T-cell (primary cell): ENCODE measurements at regions of chr20 and their contacts with region 1.

Region 1: GRCh38 chr20:57426831-57427230 is 35.6 kb downstream of the RBM38 start:
- DNase-seq: no peak
- ATAC-seq: no peak
- H3K4me3 ChIP-seq: no peak overlapping the region
- H3K4me3 Mint-ChIP-seq: peak overlapping the region in 1 of 3 donors; percentile 48
- H3K27ac ChIP-seq: no peak overlapping the region
- H3K27ac Mint-ChIP-seq: no peak overlapping the region
- H3K4me1 ChIP-seq: peaks cover 24 to 58% of the 10 kb centered on the region in 2 experiments
- H3K4me1 Mint-ChIP-seq: peaks cover 42 to 55% (median 53%) of the 10 kb centered on the region in 3 donors
- H3K27me3 ChIP-seq: peaks cover 0 to 11% of the 10 kb centered on the region in 2 experiments
- H3K27me3 Mint-ChIP-seq: no peaks in the 10 kb centered on the region

Region 2: DNA sequence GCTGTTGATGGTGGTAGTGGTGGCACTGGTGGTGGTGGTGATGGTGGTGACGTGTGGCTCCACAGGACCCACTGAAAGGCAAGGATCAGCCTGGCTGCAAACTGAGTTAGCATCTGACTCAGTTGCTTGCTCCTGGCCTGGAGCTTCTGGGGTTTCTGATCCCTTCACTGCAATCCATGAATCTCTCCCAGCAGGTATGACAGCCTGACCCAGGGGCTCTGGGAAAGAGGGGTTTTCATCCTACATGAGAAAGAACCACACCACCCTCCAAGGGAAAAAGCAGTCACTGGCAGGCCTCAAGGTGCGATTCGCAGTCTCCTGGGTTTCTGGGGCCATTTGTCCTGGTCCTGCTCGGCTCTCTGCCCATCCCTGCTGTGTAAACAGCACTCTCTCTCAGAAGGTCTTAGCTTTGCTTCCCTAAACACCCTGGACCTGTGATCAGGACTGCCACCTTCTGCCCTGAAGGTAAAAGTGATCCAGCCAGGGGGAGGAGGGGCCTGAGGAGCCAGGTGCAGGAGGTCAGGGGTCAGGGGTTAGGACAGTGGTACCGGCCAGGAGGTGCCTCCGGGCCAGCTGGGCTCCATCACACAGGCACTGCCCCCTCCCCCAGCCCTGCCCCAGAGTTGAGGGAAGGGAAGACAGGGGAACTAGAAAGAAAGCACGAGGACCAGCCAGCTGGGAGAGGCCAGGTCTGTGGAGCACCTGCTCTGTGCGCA is 312.4 kb before region 1 on chr20:
- CTCF ChIA-PET with region 1: no interaction called
- POLR2A ChIA-PET with region 1: interaction called in 1 of 2 experiments, 18 read pairs
- DNase-seq: no peak
- ATAC-seq: no peak
- H3K4me3 ChIP-seq: no peak overlapping the region
- H3K4me3 Mint-ChIP-seq: no peak overlapping the region
- H3K27ac ChIP-seq: no peak overlapping the region
- H3K27ac Mint-ChIP-seq: no peak overlapping the region
- H3K4me1 ChIP-seq: no peaks in the 10 kb centered on the region
- H3K4me1 Mint-ChIP-seq: no peaks in the 10 kb centered on the region
- H3K27me3 ChIP-seq: peaks cover 0 to 21% of the 10 kb centered on the region in 2 experiments
- H3K27me3 Mint-ChIP-seq: peaks cover 3 to 13% of the 10 kb centered on the region in 2 donors

Region 3: DNA sequence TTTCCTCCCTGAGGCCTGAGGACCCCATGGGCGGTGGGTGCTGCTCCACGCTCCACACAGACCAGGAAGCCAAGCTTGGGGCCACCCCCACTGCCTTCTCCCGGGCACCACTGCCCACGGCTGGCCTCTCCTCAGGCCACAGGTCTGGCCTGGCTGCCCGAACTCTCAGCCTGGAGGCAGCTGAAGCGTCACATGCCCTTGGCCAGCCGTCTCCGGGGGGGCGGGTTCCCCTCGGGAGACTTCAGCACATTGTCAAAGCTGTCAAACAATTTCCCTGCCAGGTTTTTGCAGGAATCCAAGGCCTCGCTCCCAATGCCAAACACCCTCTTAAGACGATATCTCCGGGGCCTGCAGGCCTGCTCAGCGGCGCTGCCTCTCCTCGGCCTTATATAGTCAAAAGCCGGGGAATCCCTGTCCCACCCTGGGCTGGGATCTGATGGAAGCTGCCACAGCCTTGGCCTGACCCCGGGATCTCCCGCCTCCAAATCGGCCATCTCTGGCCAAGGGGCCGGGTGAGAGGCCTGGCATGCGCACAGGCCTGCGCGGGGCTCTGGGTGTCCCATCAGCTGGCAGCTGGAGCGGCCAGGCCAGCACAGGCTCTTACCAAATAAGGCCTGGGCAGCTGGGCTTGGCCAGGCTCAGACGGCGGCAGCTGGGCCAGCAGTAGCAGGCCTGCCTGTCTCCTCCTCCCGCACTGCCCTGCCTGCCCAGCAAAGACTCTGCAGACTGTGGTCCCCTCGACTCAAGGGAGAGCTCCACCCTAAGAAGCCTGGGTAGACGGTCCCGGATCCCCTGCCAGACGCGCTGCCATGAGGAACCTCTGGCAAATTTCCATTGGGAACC is 14.1 kb after region 1 on chr20:
- CTCF ChIA-PET with region 1: no interaction called
- POLR2A ChIA-PET with region 1: no interaction called
- DNase-seq: no peak
- ATAC-seq: no peak
- H3K4me3 ChIP-seq: no peak overlapping the region
- H3K4me3 Mint-ChIP-seq: no peak overlapping the region
- H3K27ac ChIP-seq: no peak overlapping the region
- H3K27ac Mint-ChIP-seq: no peak overlapping the region
- H3K4me1 ChIP-seq: peaks cover 5 to 13% of the 10 kb centered on the region in 2 experiments
- H3K4me1 Mint-ChIP-seq: peaks cover 11 to 18% (median 11%) of the 10 kb centered on the region in 3 donors
- H3K27me3 ChIP-seq: peaks cover 0 to 7% of the 10 kb centered on the region in 2 experiments
- H3K27me3 Mint-ChIP-seq: no peaks in the 10 kb centered on the region

Region 4: GRCh38 chr20:57628047-57628961 is 201.5 kb after region 1 on chr20:
- CTCF ChIA-PET with region 1: no interaction called
- POLR2A ChIA-PET with region 1: no interaction called
- DNase-seq: peak in 34 of 35 experiments; percentile 43 to 86 (median 74)
- ATAC-seq: peak; percentile 82 to 86 (median 82)
- H3K4me3 ChIP-seq: peak overlapping the region; percentile 26 to 32
- H3K4me3 Mint-ChIP-seq: peak overlapping the region; percentile 78 to 87 (median 79)
- H3K27ac ChIP-seq: peak overlapping the region; percentile 90
- H3K27ac Mint-ChIP-seq: peak overlapping the region; percentile 97 to 99
- H3K4me1 ChIP-seq: peaks cover 31 to 40% of the 10 kb centered on the region in 2 experiments
- H3K4me1 Mint-ChIP-seq: peaks cover 72 to 74% (median 73%) of the 10 kb centered on the region in 3 donors
- H3K27me3 ChIP-seq: no peaks in the 10 kb centered on the region
- H3K27me3 Mint-ChIP-seq: peaks cover 0 to 2% of the 10 kb centered on the region in 2 donors

Region 5: GRCh38 chr20:57682184-57683101 is 255.6 kb after region 1 on chr20:
- CTCF ChIA-PET with region 1: no interaction called
- POLR2A ChIA-PET with region 1: no interaction called
- DNase-seq: no peak
- ATAC-seq: no peak
- H3K4me3 ChIP-seq: no peak overlapping the region
- H3K4me3 Mint-ChIP-seq: no peak overlapping the region
- H3K27ac ChIP-seq: no peak overlapping the region
- H3K27ac Mint-ChIP-seq: no peak overlapping the region
- H3K4me1 ChIP-seq: peaks cover 2 to 16% of the 10 kb centered on the region in 2 experiments
- H3K4me1 Mint-ChIP-seq: peaks cover 25 to 50% (median 43%) of the 10 kb centered on the region in 3 donors
- H3K27me3 ChIP-seq: peaks cover 0 to 12% of the 10 kb centered on the region in 2 experiments
- H3K27me3 Mint-ChIP-seq: no peaks in the 10 kb centered on the region